ENCODE measurements at regions of chr17 and their contacts with region 1.

Region 1: DNA sequence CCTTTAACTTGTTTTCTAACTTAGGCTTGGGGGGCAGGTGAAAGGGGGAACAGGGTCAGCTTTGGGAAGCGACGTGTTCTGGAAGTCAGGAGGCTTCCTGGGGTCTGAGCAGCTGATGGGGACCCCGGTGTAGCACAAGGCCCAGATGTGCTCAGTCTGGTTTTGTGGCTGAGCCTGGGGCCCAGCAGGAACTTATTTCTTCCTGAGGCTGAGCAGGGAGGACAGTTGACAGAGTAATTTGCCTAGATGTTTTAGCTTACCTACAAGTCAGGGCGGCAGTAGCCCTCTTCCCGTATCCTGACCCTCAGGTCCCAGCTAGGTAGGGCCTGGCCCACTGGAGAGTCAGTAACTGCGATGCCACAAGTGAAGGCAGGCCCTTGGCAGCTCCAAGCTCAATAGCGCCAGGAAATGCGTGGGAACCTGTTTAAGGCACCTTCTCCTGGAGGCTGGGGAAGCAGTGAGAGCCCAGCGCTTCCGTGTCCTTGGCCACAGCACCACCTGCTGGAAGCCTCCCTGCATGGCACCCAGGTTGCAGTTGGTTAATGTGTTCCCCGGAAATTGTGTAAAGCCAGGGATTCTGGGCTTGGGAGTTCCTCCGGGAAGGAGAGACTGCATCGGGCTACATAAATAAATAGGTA is 5.2 kb downstream of the CCR7 start:
- DNase-seq: peak; percentile 88
- ATAC-seq: peak; percentile 46
- H3K4me3 ChIP-seq: peak overlapping the region; percentile 34 to 90 (median 83)
- H3K4me3 Mint-ChIP-seq: peak overlapping the region; percentile 92
- H3K27ac ChIP-seq: peak overlapping the region; percentile 90 to 98
- H3K27ac Mint-ChIP-seq: peak overlapping the region; percentile 94
- H3K4me1 ChIP-seq: peaks cover 79 to 99% of the 10 kb centered on the region in 2 donors
- H3K4me1 Mint-ChIP-seq: peaks cover 79% of the 10 kb centered on the region
- H3K27me3 ChIP-seq: no peaks in the 10 kb centered on the region
- H3K27me3 Mint-ChIP-seq: no peaks in the 10 kb centered on the region
- CTCF ChIP-seq: peak; percentile 97

Region 2: DNA sequence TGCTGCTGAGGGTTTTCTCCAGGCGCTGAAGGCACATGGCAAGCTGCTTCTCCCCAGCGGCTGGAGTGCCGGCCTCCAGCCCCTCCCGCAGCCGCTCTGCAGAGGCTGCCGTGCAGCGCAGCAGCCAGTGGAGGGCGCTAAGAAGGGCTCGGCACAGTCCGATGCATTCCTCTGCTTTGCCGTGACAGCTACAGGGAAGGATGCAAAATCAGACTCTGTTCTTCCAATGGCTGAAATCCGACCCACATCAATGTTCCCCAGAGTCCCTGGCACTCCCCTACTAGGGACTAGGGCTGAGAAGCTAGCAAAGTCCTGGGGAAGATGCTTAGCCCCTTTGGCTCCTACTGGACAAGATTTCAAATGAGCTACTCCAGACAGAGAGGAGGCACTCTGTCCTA is 524.9 kb before region 1 on chr17:
- CTCF ChIA-PET with region 1: no interaction called
- POLR2A ChIA-PET with region 1: no interaction called
- intact Hi-C with region 1: no loop called
- DNase-seq: no peak
- ATAC-seq: no peak
- H3K4me3 ChIP-seq: no peak overlapping the region
- H3K4me3 Mint-ChIP-seq: no peak overlapping the region
- H3K27ac ChIP-seq: no peak overlapping the region
- H3K27ac Mint-ChIP-seq: no peak overlapping the region
- H3K4me1 ChIP-seq: no peaks in the 10 kb centered on the region
- H3K4me1 Mint-ChIP-seq: no peaks in the 10 kb centered on the region
- H3K27me3 ChIP-seq: no peaks in the 10 kb centered on the region
- H3K27me3 Mint-ChIP-seq: no peaks in the 10 kb centered on the region
- CTCF ChIP-seq: peak; percentile 16

Region 3: GRCh38 chr17:40317880-40318829 is 241.9 kb before region 1 on chr17:
- CTCF ChIA-PET with region 1: no interaction called
- POLR2A ChIA-PET with region 1: no interaction called
- intact Hi-C with region 1: loop called (anchors 5 kb)
- DNase-seq: peak; percentile 95
- ATAC-seq: peak; percentile 67
- H3K4me3 ChIP-seq: peak overlapping the region; percentile 87 to 100 (median 93)
- H3K4me3 Mint-ChIP-seq: peak overlapping the region; percentile 97
- H3K27ac ChIP-seq: peak overlapping the region; percentile 95 to 96
- H3K27ac Mint-ChIP-seq: peak overlapping the region; percentile 100
- H3K4me1 ChIP-seq: peaks cover 56 to 78% of the 10 kb centered on the region in 2 donors
- H3K4me1 Mint-ChIP-seq: peaks cover 80% of the 10 kb centered on the region
- H3K27me3 ChIP-seq: no peaks in the 10 kb centered on the region
- H3K27me3 Mint-ChIP-seq: no peaks in the 10 kb centered on the region
- CTCF ChIP-seq: no peak

Region 4: GRCh38 chr17:40345161-40345993 is 214.7 kb before region 1 on chr17:
- CTCF ChIA-PET with region 1: no interaction called
- POLR2A ChIA-PET with region 1: no interaction called
- intact Hi-C with region 1: no loop called
- DNase-seq: peak; percentile 55
- ATAC-seq: no peak
- H3K4me3 ChIP-seq: peak overlapping the region in 4 of 5 experiments; percentile 31 to 55 (median 46)
- H3K4me3 Mint-ChIP-seq: peak overlapping the region; percentile 91
- H3K27ac ChIP-seq: peak overlapping the region; percentile 49 to 68
- H3K27ac Mint-ChIP-seq: peak overlapping the region; percentile 78
- H3K4me1 ChIP-seq: peaks cover 65 to 78% of the 10 kb centered on the region in 2 donors
- H3K4me1 Mint-ChIP-seq: peaks cover 79% of the 10 kb centered on the region
- H3K27me3 ChIP-seq: no peaks in the 10 kb centered on the region
- H3K27me3 Mint-ChIP-seq: no peaks in the 10 kb centered on the region
- CTCF ChIP-seq: no peak

Region 5: DNA sequence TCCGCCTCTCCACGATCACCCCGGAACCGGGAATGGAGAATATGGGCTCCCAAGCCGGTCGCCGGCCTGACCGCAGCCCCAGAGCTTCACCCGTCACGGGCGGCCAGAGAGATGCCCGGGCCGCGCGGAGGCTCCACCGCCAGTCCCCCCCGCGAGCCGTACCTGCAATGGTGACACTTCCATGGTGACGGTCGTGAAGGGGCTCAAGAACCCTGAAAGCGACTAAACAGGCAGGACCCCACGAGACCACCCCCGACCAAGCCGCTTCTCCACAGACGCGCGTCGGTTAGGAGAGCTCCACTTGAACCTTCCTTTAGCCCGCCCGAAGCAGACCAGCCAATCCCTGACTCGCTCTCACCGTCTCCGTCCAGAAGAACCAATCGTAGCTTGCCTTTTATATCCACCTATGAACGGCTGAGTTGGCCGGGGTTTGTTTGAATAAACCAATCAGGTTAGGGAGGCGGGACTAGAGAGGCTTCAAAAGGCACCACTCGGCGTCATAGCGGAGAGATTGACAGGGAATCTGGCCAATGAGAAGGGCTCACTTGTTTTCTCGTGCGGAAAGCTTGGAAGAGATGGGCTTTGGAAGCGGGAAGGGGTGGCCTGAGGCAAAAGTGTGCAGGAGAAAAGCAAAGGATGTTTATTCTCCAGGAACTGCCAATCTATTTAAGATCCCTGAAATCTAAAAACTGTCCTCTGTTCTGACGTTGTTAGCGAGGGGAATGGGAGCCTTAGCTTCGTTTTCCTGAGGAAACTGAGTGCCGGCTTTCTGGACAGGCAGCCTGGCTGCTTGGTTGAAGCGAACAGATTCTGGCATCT is 142.3 kb before region 1 on chr17 and contains the start of gene TOP2A:
- CTCF ChIA-PET with region 1: interaction called, 9 read pairs
- POLR2A ChIA-PET with region 1: interaction called, 3 read pairs
- intact Hi-C with region 1: loop called (anchors 2 kb)
- DNase-seq: peak; percentile 99
- ATAC-seq: peak; percentile 99
- H3K4me3 ChIP-seq: peak within 1 kb of the TSS; percentile 63 to 93 (median 84)
- H3K4me3 Mint-ChIP-seq: peak within 1 kb of the TSS; percentile 89
- H3K27ac ChIP-seq: peak within 1 kb of the TSS; percentile 63 to 72
- H3K27ac Mint-ChIP-seq: peak within 1 kb of the TSS; percentile 86
- H3K4me1 ChIP-seq: peaks cover 7 to 17% of the 10 kb centered on the region in 2 donors
- H3K4me1 Mint-ChIP-seq: peaks cover 15% of the 10 kb centered on the region
- H3K27me3 ChIP-seq: no peaks in the 10 kb centered on the region
- H3K27me3 Mint-ChIP-seq: no peaks in the 10 kb centered on the region
- CTCF ChIP-seq: no peak
- total RNA-seq, gene TOP2A: 3.0 and 3.1 TPM in 2 replicates

Region 6: GRCh38 chr17:40542558-40543411 is 17.3 kb before region 1 on chr17:
- CTCF ChIA-PET with region 1: interaction called, 329 read pairs
- POLR2A ChIA-PET with region 1: interaction called, 78 read pairs
- intact Hi-C with region 1: loop called (anchors 1 kb)
- DNase-seq: peak; percentile 71
- ATAC-seq: peak; percentile 11
- H3K4me3 ChIP-seq: no peak overlapping the region
- H3K4me3 Mint-ChIP-seq: peak overlapping the region; percentile 63
- H3K27ac ChIP-seq: peak overlapping the region in 1 of 2 donors; percentile 30
- H3K27ac Mint-ChIP-seq: peak overlapping the region; percentile 89
- H3K4me1 ChIP-seq: peaks cover 48 to 61% of the 10 kb centered on the region in 2 donors
- H3K4me1 Mint-ChIP-seq: peaks cover 64% of the 10 kb centered on the region
- H3K27me3 ChIP-seq: no peaks in the 10 kb centered on the region
- H3K27me3 Mint-ChIP-seq: no peaks in the 10 kb centered on the region
- CTCF ChIP-seq: no peak

Region 7: GRCh38 chr17:40622509-40622928 is 62.4 kb after region 1 on chr17:
- CTCF ChIA-PET with region 1: interaction called, 634 read pairs
- POLR2A ChIA-PET with region 1: interaction called, 132 read pairs
- intact Hi-C with region 1: no loop called
- DNase-seq: peak; percentile 62
- ATAC-seq: peak; percentile 23
- H3K4me3 ChIP-seq: no peak overlapping the region
- H3K4me3 Mint-ChIP-seq: peak overlapping the region; percentile 69
- H3K27ac ChIP-seq: no peak overlapping the region
- H3K27ac Mint-ChIP-seq: peak overlapping the region; percentile 77
- H3K4me1 ChIP-seq: peaks cover 57 to 58% of the 10 kb centered on the region in 2 donors
- H3K4me1 Mint-ChIP-seq: peaks cover 59% of the 10 kb centered on the region
- H3K27me3 ChIP-seq: no peaks in the 10 kb centered on the region
- H3K27me3 Mint-ChIP-seq: no peaks in the 10 kb centered on the region
- CTCF ChIP-seq: no peak

Region 8: DNA sequence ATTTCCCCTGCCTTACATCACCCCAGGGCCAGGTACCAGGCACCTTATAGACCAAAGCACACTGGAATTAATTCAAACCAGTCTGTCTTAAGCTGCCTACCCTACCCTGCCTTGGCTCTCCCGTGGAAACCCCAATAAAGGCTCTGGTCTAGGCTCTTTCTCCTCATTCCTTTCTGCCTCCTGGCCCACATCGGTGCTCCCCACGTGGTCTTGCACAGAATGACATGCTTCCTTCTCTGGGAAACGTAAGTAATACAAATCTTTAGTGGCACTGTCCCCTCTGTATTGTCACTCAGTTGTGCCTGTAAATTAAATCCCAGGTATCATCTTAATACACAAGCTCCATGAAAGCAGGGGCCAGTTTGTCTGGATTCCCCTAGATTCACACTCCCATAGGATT is 178.5 kb after region 1 on chr17:
- CTCF ChIA-PET with region 1: no interaction called
- POLR2A ChIA-PET with region 1: no interaction called
- intact Hi-C with region 1: no loop called
- DNase-seq: no peak
- ATAC-seq: no peak
- H3K4me3 ChIP-seq: no peak overlapping the region
- H3K4me3 Mint-ChIP-seq: no peak overlapping the region
- H3K27ac ChIP-seq: no peak overlapping the region
- H3K27ac Mint-ChIP-seq: no peak overlapping the region
- H3K4me1 ChIP-seq: no peaks in the 10 kb centered on the region
- H3K4me1 Mint-ChIP-seq: no peaks in the 10 kb centered on the region
- H3K27me3 ChIP-seq: peaks cover 0 to 20% (median 13%) of the 10 kb centered on the region in 4 experiments
- H3K27me3 Mint-ChIP-seq: peaks cover 36% of the 10 kb centered on the region
- CTCF ChIP-seq: no peak

Region 9: GRCh38 chr17:40818733-40819527 is 258.9 kb after region 1 on chr17:
- CTCF ChIA-PET with region 1: interaction called, 4 read pairs
- POLR2A ChIA-PET with region 1: no interaction called
- intact Hi-C with region 1: loop called (anchors 10 kb)
- DNase-seq: peak; percentile 95
- ATAC-seq: peak; percentile 91
- H3K4me3 ChIP-seq: peak overlapping the region; percentile 50 to 95 (median 71)
- H3K4me3 Mint-ChIP-seq: peak overlapping the region; percentile 89
- H3K27ac ChIP-seq: peak overlapping the region; percentile 68 to 86
- H3K27ac Mint-ChIP-seq: peak overlapping the region; percentile 85
- H3K4me1 ChIP-seq: peaks cover 8 to 13% of the 10 kb centered on the region in 2 donors
- H3K4me1 Mint-ChIP-seq: peaks cover 18% of the 10 kb centered on the region
- H3K27me3 ChIP-seq: peaks cover 0 to 6% (median 0%) of the 10 kb centered on the region in 4 experiments
- H3K27me3 Mint-ChIP-seq: peaks cover 16% of the 10 kb centered on the region
- CTCF ChIP-seq: no peak